ENCODE measurements at regions of chr1 and their contacts with region 1.

Region 1: DNA sequence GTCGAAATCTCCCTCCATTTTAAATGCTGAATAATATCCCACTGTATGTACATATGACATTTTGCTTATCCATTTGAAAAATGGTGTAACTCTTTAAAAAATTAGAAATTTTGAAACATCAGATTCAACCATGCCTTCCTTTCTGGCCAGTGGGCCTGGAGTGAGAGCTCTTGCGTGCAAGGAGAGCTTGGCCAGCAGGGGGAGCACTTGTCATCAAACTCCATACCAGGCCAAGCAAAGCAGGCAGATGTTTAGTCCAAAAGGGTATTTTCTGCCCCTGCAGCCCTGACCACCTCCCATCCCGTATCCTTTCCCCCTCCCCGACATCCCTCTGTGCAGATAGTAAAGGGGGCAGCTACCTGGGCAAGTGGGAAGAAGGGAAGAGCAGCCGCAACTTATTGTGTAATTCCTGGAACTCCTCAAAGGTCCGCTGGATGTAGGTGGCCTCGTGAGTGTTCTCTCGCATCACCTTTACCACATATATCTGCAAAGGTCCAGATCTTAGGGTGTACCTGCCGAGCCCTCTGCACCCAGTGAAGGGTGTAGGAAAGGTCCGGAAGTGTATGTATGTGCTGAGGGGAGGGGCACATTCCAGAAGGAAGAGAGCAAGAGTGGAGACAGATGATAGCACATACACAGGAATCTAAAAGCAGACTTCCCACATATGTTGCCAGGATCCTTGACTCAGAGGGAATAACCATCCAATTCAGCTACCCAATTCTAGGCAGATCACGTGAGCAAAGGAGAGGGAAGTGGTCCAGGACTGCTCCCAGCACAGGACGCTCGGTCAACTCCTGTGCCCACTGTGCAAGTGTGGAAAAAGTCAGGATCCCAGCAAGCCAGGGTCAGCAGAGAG is 19.9 kb upstream of the PPP1R15B start:
- DNase-seq: peak; percentile 87
- H3K4me3 Mint-ChIP-seq: no peak overlapping the region
- H3K27ac Mint-ChIP-seq: no peak overlapping the region
- H3K4me1 Mint-ChIP-seq: peaks cover 9% of the 10 kb centered on the region
- H3K27me3 Mint-ChIP-seq: no peaks in the 10 kb centered on the region
- CTCF ChIP-seq: peak; percentile 94

Region 2: GRCh38 chr1:204417231-204417997 is 14.1 kb before region 1 on chr1:
- CTCF ChIA-PET with region 1: interaction called, 20 read pairs
- intact Hi-C with region 1: no loop called
- DNase-seq: peak; percentile 83
- H3K4me3 Mint-ChIP-seq: peak overlapping the region; percentile 68
- H3K27ac Mint-ChIP-seq: peak overlapping the region; percentile 97
- H3K4me1 Mint-ChIP-seq: peaks cover 63% of the 10 kb centered on the region
- H3K27me3 Mint-ChIP-seq: no peaks in the 10 kb centered on the region
- CTCF ChIP-seq: no peak

Region 3: DNA sequence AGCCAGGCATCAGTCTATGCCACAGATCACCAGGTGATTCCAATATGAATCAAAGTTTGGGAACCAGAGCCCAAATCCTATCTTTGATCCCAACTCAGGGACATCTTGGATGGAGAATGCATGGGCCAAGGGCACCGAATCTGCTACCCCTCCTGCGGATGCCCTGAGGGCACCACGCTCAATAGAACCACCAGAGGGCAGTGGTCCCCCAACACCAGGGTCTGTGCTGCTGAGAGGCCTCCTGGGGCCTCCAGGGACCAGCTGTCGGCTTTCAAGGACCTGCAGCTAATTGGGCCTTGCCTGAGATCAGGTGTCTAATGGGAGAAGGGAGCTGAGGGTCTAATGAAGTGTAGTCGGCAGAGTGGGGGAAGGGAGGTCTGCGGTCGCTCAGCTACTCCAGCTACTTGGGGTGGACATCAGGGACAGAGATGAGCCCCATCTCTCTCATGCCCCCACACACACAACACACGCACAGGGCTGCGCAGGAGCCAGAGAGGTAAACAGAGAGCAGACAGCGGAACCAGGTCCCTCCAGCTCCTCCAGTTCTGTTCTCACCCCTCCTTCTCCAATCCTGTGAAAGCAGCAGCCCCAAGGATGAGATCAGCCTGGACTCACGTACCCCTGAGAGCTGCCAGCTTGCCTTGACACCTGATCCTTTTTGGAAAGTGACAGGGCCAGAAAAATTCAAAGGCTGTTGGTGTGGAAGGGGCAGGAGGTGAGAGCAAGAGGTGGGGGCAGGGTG is 15.0 kb after region 1 on chr1:
- CTCF ChIA-PET with region 1: interaction called, 12 read pairs
- intact Hi-C with region 1: no loop called
- DNase-seq: peak; percentile 89
- H3K4me3 Mint-ChIP-seq: no peak overlapping the region
- H3K27ac Mint-ChIP-seq: no peak overlapping the region
- H3K4me1 Mint-ChIP-seq: peaks cover 79% of the 10 kb centered on the region
- H3K27me3 Mint-ChIP-seq: no peaks in the 10 kb centered on the region
- CTCF ChIP-seq: peak; percentile 73

Region 4: GRCh38 chr1:204494281-204495077 is 62.9 kb after region 1 on chr1 and contains the start of gene PIK3C2B:
- CTCF ChIA-PET with region 1: interaction called, 27 read pairs
- intact Hi-C with region 1: no loop called
- DNase-seq: peak; percentile 92
- H3K4me3 Mint-ChIP-seq: peak within 1 kb of the TSS; percentile 84
- H3K27ac Mint-ChIP-seq: peak within 1 kb of the TSS; percentile 77
- H3K4me1 Mint-ChIP-seq: peaks cover 33% of the 10 kb centered on the region
- H3K27me3 Mint-ChIP-seq: peaks cover 8% of the 10 kb centered on the region
- CTCF ChIP-seq: peak; percentile 68
- total RNA-seq, gene PIK3C2B: 24.4 and 33.9 TPM in 2 replicates

Region 5: GRCh38 chr1:204506961-204507387 is 75.4 kb after region 1 on chr1:
- CTCF ChIA-PET with region 1: interaction called, 39 read pairs
- intact Hi-C with region 1: loop called (anchors 1 kb)
- DNase-seq: peak; percentile 92
- H3K4me3 Mint-ChIP-seq: peak overlapping the region; percentile 71
- H3K27ac Mint-ChIP-seq: peak overlapping the region; percentile 100
- H3K4me1 Mint-ChIP-seq: peaks cover 45% of the 10 kb centered on the region
- H3K27me3 Mint-ChIP-seq: peaks cover 14% of the 10 kb centered on the region
- CTCF ChIP-seq: no peak